Thyroid gland (tissue), 4 donors: ENCODE measurements at regions of chr6 and their contacts with region 1.

Region 1: GRCh38 chr6:155174576-155175211 is 89.1 kb upstream of the CLDN20 start:
- DNase-seq: peak; percentile 72 to 73
- H3K4me3 ChIP-seq: no peak overlapping the region
- H3K27ac ChIP-seq: no peak overlapping the region
- H3K4me1 ChIP-seq: peaks cover 6 to 11% of the 10 kb centered on the region in 2 donors
- H3K27me3 ChIP-seq: no peaks in the 10 kb centered on the region
- CTCF ChIP-seq: peak in 5 of 6 experiments; percentile 33 to 86 (median 62)
- POLR2A ChIP-seq: no peak

Region 2: GRCh38 chr6:154675602-154676088 is 499.0 kb before region 1 on chr6:
- intact Hi-C with region 1: loop called (anchors 10 kb)
- DNase-seq: peak; percentile 87 to 90
- H3K4me3 ChIP-seq: no peak overlapping the region
- H3K27ac ChIP-seq: no peak overlapping the region
- H3K4me1 ChIP-seq: no peaks in the 10 kb centered on the region
- H3K27me3 ChIP-seq: no peaks in the 10 kb centered on the region
- CTCF ChIP-seq: peak; percentile 96 to 100 (median 99)
- POLR2A ChIP-seq: no peak

Region 3: GRCh38 chr6:154872542-154873114 is 302.1 kb before region 1 on chr6:
- intact Hi-C with region 1: loop called (anchors 5 kb)
- DNase-seq: peak; percentile 41 to 42
- H3K4me3 ChIP-seq: no peak overlapping the region
- H3K27ac ChIP-seq: no peak overlapping the region
- H3K4me1 ChIP-seq: peaks cover 15 to 31% of the 10 kb centered on the region in 2 donors
- H3K27me3 ChIP-seq: no peaks in the 10 kb centered on the region
- CTCF ChIP-seq: peak in 2 of 6 experiments; percentile 4 to 13
- POLR2A ChIP-seq: no peak

Region 4: GRCh38 chr6:154928325-154928922 is 246.3 kb before region 1 on chr6:
- intact Hi-C with region 1: loop called (anchors 5 kb)
- DNase-seq: peak; percentile 66 to 71
- H3K4me3 ChIP-seq: no peak overlapping the region
- H3K27ac ChIP-seq: no peak overlapping the region
- H3K4me1 ChIP-seq: peaks cover 5 to 12% of the 10 kb centered on the region in 2 donors
- H3K27me3 ChIP-seq: no peaks in the 10 kb centered on the region
- CTCF ChIP-seq: peak; percentile 62 to 91 (median 79)
- POLR2A ChIP-seq: no peak

Region 5: GRCh38 chr6:155253337-155253736 is 78.6 kb after region 1 on chr6:
- intact Hi-C with region 1: loop called (anchors 5 kb)
- DNase-seq: peak; percentile 71 to 72
- H3K4me3 ChIP-seq: no peak overlapping the region
- H3K27ac ChIP-seq: peak overlapping the region; percentile 78 to 98 (median 83)
- H3K4me1 ChIP-seq: peaks cover 6 to 25% of the 10 kb centered on the region in 2 donors
- H3K27me3 ChIP-seq: no peaks in the 10 kb centered on the region
- CTCF ChIP-seq: no peak
- POLR2A ChIP-seq: peak in 1 of 2 donors; percentile 46